Activated CD4-positive, alpha-beta memory T cell treated with anti-CD3 and anti-CD28 coated beads, Interleukin-2, amount 10 ng/mL, durations not matched to agents 7 days and 5 days (primary cell): ENCODE measurements at regions of chr11 and their contacts with region 1.

Region 1: DNA sequence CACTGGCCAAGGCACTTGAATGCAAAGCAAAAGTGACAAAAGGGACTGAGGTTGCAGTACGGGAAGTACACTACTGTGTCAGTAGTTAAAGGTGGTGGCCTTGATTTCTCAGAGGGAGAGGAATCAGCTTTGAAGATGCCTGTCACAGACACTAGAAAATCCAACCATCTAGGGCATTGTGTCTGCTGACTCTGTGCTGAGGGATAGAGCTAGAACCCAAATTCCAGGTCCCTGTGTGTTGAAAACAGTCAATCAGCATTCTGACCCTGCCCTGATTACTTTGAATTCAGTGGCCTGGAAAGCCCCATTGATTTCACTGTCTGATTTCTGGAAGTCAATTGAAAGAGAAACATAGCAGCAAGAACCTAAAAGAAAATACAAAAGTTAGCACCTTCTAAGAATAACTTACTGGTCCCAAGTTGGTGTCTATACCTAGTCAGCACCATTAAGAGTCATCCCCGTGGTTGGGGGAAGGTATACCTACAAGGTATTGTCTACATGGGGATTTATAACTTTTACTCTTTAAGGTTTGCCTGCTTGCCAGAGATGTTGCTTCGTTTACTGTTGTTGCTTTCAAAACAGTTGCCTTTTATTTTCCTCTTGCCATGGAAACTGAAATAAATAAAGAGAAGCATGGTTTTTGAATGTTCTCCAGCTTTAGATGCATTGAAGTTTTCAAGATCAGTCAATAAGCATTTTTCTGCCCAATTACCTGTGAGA is 97.3 kb downstream of the PDHX start:
- DNase-seq: peak; percentile 28
- H3K4me3 Mint-ChIP-seq: peak overlapping the region; percentile 59
- H3K27ac Mint-ChIP-seq: peak overlapping the region; percentile 84
- H3K4me1 Mint-ChIP-seq: peaks cover 38% of the 10 kb centered on the region
- H3K27me3 Mint-ChIP-seq: peaks cover 6% of the 10 kb centered on the region

Region 2: GRCh38 chr11:34997952-34998528 is 15.6 kb before region 1 on chr11:
- CTCF ChIA-PET with region 1: interaction called, 10 read pairs
- POLR2A ChIA-PET with region 1: no interaction called
- DNase-seq: no peak
- H3K4me3 Mint-ChIP-seq: no peak overlapping the region
- H3K27ac Mint-ChIP-seq: peak overlapping the region; percentile 37
- H3K4me1 Mint-ChIP-seq: peaks cover 25% of the 10 kb centered on the region
- H3K27me3 Mint-ChIP-seq: no peaks in the 10 kb centered on the region

Region 3: GRCh38 chr11:35040221-35040942 is 26.7 kb after region 1 on chr11:
- CTCF ChIA-PET with region 1: interaction called, 4 read pairs
- POLR2A ChIA-PET with region 1: interaction called, 19 read pairs
- DNase-seq: peak; percentile 74
- H3K4me3 Mint-ChIP-seq: peak overlapping the region; percentile 82
- H3K27ac Mint-ChIP-seq: peak overlapping the region; percentile 99
- H3K4me1 Mint-ChIP-seq: peaks cover 75% of the 10 kb centered on the region
- H3K27me3 Mint-ChIP-seq: peaks cover 13% of the 10 kb centered on the region